Mammary epithelial cell (primary cell): ENCODE measurements at regions of chr17 and their contacts with region 1.

Region 1: GRCh38 chr17:28494445-28495188 is 11.5 kb upstream of the FOXN1 start:
- DNase-seq: peak; percentile 57
- H3K4me3 ChIP-seq: no peak overlapping the region
- H3K27ac ChIP-seq: no peak overlapping the region
- H3K4me1 ChIP-seq: peaks cover 10% of the 10 kb centered on the region
- H3K27me3 ChIP-seq: no peaks in the 10 kb centered on the region
- CTCF ChIP-seq: peak; percentile 81 to 96

Region 2: GRCh38 chr17:27892866-27893769 is 601.5 kb before region 1 on chr17 and contains the start of gene LYRM9:
- CTCF ChIA-PET with region 1: no interaction called
- dilution Hi-C with region 1: no loop called
- in situ Hi-C with region 1: no loop called
- intact Hi-C with region 1: loop called (anchors 5 kb)
- DNase-seq: peak; percentile 78
- H3K4me3 ChIP-seq: peak within 1 kb of the TSS; percentile 54 to 68 (median 58)
- H3K27ac ChIP-seq: no peak within 1 kb of the TSS
- H3K4me1 ChIP-seq: no peaks in the 10 kb centered on the region
- H3K27me3 ChIP-seq: no peaks in the 10 kb centered on the region
- CTCF ChIP-seq: peak; percentile 74 to 78
- total RNA-seq, gene LYRM9: 4.3 to 9.8 TPM

Region 3: GRCh38 chr17:28252436-28252835 is 242.2 kb before region 1 on chr17:
- CTCF ChIA-PET with region 1: no interaction called
- dilution Hi-C with region 1: no loop called
- in situ Hi-C with region 1: no loop called
- intact Hi-C with region 1: loop called (anchors 5 kb)
- DNase-seq: peak; percentile 83
- H3K4me3 ChIP-seq: no peak overlapping the region
- H3K27ac ChIP-seq: no peak overlapping the region
- H3K4me1 ChIP-seq: peaks cover 15% of the 10 kb centered on the region
- H3K27me3 ChIP-seq: no peaks in the 10 kb centered on the region
- CTCF ChIP-seq: no peak

Region 4: DNA sequence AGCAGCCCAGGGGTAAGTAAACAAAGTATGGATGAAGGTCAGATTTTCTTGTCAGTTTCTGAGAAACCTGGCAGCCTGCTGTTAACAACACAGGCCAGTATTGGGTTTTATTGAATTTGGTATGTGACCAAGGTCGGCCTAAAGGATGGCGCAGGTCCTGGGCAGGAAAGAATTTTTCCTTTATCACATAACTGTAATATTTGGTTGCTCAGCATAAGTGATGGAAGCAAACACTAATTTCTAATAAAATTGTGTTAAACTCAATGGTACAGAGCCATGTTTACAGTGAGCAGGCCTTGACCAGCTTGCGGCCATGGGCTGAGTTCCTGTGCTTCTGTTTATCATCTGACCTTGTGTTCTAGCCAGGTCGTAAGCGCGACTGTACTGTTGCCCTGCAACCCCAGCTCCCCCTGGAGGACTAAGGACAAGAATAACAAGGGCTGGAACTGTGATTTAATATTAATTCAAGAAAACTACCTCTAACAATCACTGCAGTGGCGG is 147.8 kb before region 1 on chr17:
- CTCF ChIA-PET with region 1: no interaction called
- dilution Hi-C with region 1: no loop called
- in situ Hi-C with region 1: loop called in 1 of 2 experiments (anchors 25 kb)
- intact Hi-C with region 1: loop called (anchors 1 kb)
- DNase-seq: no peak
- H3K4me3 ChIP-seq: no peak overlapping the region
- H3K27ac ChIP-seq: peak overlapping the region; percentile 47
- H3K4me1 ChIP-seq: peaks cover 33% of the 10 kb centered on the region
- H3K27me3 ChIP-seq: no peaks in the 10 kb centered on the region
- CTCF ChIP-seq: peak in 1 of 2 donors; percentile 33

Region 5: GRCh38 chr17:28405632-28406472 is 88.8 kb before region 1 on chr17 and contains the start of gene SLC46A1:
- CTCF ChIA-PET with region 1: no interaction called
- dilution Hi-C with region 1: no loop called
- in situ Hi-C with region 1: no loop called
- intact Hi-C with region 1: loop called (anchors 1 kb)
- DNase-seq: peak; percentile 23
- H3K4me3 ChIP-seq: peak within 1 kb of the TSS; percentile 49 to 73 (median 68)
- H3K27ac ChIP-seq: peak within 1 kb of the TSS; percentile 62
- H3K4me1 ChIP-seq: peaks cover 52% of the 10 kb centered on the region
- H3K27me3 ChIP-seq: no peaks in the 10 kb centered on the region
- CTCF ChIP-seq: no peak
- total RNA-seq, gene SLC46A1: 15.3 to 47.8 TPM

Region 6: GRCh38 chr17:28540231-28540630 is 45.6 kb after region 1 on chr17:
- CTCF ChIA-PET with region 1: interaction called, 3 read pairs
- dilution Hi-C with region 1: no loop called
- in situ Hi-C with region 1: loop called (anchors 5 kb)
- intact Hi-C with region 1: loop called (anchors 1 kb)
- DNase-seq: no peak
- H3K4me3 ChIP-seq: no peak overlapping the region
- H3K27ac ChIP-seq: no peak overlapping the region
- H3K4me1 ChIP-seq: no peaks in the 10 kb centered on the region
- H3K27me3 ChIP-seq: no peaks in the 10 kb centered on the region
- CTCF ChIP-seq: no peak

Region 7: GRCh38 chr17:29102741-29103181 is 608.1 kb after region 1 on chr17:
- CTCF ChIA-PET with region 1: no interaction called
- dilution Hi-C with region 1: no loop called
- in situ Hi-C with region 1: no loop called
- intact Hi-C with region 1: no loop called
- DNase-seq: peak; percentile 90
- H3K4me3 ChIP-seq: no peak overlapping the region
- H3K27ac ChIP-seq: peak overlapping the region; percentile 54
- H3K4me1 ChIP-seq: peaks cover 24% of the 10 kb centered on the region
- H3K27me3 ChIP-seq: no peaks in the 10 kb centered on the region
- CTCF ChIP-seq: no peak